HepG2 (cell line): ENCODE measurements at regions of chr2 and their contacts with region 1.

Region 1: DNA sequence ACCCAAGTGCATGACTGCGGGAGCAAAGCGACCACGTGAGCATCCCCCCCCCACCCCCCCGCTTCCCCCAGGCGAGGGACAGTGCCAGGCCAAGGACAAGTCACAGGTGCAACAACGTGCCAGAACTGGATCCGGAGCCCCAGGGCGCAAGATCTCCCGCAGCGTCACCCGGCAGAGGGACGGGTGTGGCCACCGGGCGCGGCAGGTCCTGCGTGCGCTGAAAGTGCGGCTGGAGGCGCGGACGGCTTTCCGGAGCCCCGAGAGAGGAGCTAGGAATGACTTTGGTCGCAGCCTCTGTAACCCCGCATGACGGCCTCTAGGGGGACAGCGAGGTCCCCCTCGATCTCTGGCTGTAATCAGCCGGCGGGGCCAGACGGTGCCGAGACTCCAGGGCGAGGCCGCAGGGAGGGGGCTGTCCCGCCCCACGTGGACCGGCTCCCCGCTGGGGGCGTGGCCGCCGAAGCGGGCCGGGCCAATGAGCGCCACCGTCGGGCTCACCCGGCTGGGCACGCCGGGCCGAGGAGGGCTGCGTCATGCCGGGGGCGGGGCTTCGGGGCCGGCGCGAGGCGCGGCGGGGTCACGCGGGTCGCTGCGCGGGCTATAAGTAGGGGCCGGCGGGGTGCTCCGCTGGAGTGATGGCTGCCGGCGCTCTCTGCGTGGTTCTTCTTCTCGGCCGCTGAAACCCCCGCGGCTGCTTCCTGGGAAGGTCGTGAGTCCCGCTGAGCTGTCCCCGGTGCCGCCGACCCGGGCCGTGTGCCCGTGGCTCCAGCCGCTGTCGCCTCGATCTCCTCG is at the start of gene SLC20A1:
- DNase-seq: peak; percentile 94
- ATAC-seq: peak; percentile 88
- H3K4me3 ChIP-seq: peak within 1 kb of the TSS; percentile 92 to 97 (median 94)
- H3K27ac ChIP-seq: peak within 1 kb of the TSS; percentile 92
- H3K4me1 ChIP-seq: peaks cover 83% of the 10 kb centered on the region
- H3K27me3 ChIP-seq: no peaks in the 10 kb centered on the region; a peak in 1 of 5 replicates
- CTCF ChIP-seq: peak; percentile 76
- EP300 ChIP-seq: peak; percentile 7 to 35; a peak in 3 of 4 replicates
- POLR2A ChIP-seq: peak; percentile 97 to 99
- RAD21 ChIP-seq: peak; percentile 86
- total RNA-seq, gene SLC20A1: 60.1 and 85.9 TPM in 2 replicates

Region 2: GRCh38 chr2:112584134-112584890 is 61.2 kb before region 1 on chr2 and contains the start of gene CHCHD5:
- CTCF ChIA-PET with region 1: no interaction called
- POLR2A ChIA-PET with region 1: interaction called, 35 read pairs
- in situ Hi-C with region 1: no loop called
- intact Hi-C with region 1: no loop called
- DNase-seq: peak; percentile 98
- ATAC-seq: peak; percentile 89
- H3K4me3 ChIP-seq: peak within 1 kb of the TSS; percentile 76 to 95 (median 87)
- H3K27ac ChIP-seq: peak within 1 kb of the TSS; percentile 97
- H3K4me1 ChIP-seq: peaks cover 40% of the 10 kb centered on the region
- H3K27me3 ChIP-seq: peaks cover 0 to 4% of the 10 kb centered on the region in 2 experiments; a peak in 1 of 5 replicates
- CTCF ChIP-seq: peak; percentile 60
- EP300 ChIP-seq: peak in 1 of 2 experiments; percentile 58; a peak in 3 of 4 replicates
- POLR2A ChIP-seq: peak; percentile 88 to 95
- RAD21 ChIP-seq: no peak; the same call in 1 of the 2 replicates
- total RNA-seq, gene CHCHD5: 22.8 and 23.9 TPM in 2 replicates

Region 3: DNA sequence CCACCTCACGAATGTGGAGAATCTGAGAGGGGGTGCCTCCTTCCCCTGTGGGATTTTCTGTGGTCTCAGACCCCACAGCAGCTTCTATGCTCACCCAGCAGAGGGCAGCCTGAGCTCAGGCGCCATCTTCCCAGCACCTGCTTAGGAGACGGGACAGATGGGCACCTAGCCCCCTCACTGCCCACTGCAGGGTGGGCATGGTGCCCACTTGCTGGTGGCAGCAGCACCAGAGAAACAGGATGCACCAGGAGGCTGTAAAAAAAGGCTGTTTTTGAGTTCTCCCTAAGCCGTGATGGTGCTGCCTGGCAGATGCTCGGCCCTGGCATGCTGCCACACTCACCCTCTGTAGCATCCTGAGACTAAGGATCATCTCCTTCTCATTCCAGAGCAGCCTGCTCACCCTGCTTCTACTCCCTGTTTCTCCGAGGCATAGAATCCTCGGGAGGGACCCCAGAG is 18.9 kb before region 1 on chr2:
- CTCF ChIA-PET with region 1: interaction called, 3 read pairs
- POLR2A ChIA-PET with region 1: interaction called, 94 read pairs
- in situ Hi-C with region 1: no loop called
- intact Hi-C with region 1: loop called (anchors 2 kb)
- DNase-seq: peak; percentile 41
- ATAC-seq: peak; percentile 93
- H3K4me3 ChIP-seq: no peak overlapping the region; a peak in 1 of 6 replicates
- H3K27ac ChIP-seq: no peak overlapping the region
- H3K4me1 ChIP-seq: peaks cover 34% of the 10 kb centered on the region
- H3K27me3 ChIP-seq: peaks cover 0 to 28% of the 10 kb centered on the region in 2 experiments; a peak in 3 of 5 replicates
- CTCF ChIP-seq: peak; percentile 99
- EP300 ChIP-seq: no peak
- POLR2A ChIP-seq: no peak
- RAD21 ChIP-seq: peak; percentile 98

Region 4: GRCh38 chr2:112666764-112667122 is 21.2 kb after region 1 on chr2:
- CTCF ChIA-PET with region 1: no interaction called
- POLR2A ChIA-PET with region 1: interaction called, 32 read pairs
- in situ Hi-C with region 1: no loop called
- intact Hi-C with region 1: no loop called
- DNase-seq: peak; percentile 74
- ATAC-seq: peak; percentile 69
- H3K4me3 ChIP-seq: no peak overlapping the region
- H3K27ac ChIP-seq: no peak overlapping the region
- H3K4me1 ChIP-seq: peaks cover 30% of the 10 kb centered on the region
- H3K27me3 ChIP-seq: no peaks in the 10 kb centered on the region
- CTCF ChIP-seq: no peak
- EP300 ChIP-seq: no peak
- POLR2A ChIP-seq: no peak
- RAD21 ChIP-seq: no peak

Region 5: DNA sequence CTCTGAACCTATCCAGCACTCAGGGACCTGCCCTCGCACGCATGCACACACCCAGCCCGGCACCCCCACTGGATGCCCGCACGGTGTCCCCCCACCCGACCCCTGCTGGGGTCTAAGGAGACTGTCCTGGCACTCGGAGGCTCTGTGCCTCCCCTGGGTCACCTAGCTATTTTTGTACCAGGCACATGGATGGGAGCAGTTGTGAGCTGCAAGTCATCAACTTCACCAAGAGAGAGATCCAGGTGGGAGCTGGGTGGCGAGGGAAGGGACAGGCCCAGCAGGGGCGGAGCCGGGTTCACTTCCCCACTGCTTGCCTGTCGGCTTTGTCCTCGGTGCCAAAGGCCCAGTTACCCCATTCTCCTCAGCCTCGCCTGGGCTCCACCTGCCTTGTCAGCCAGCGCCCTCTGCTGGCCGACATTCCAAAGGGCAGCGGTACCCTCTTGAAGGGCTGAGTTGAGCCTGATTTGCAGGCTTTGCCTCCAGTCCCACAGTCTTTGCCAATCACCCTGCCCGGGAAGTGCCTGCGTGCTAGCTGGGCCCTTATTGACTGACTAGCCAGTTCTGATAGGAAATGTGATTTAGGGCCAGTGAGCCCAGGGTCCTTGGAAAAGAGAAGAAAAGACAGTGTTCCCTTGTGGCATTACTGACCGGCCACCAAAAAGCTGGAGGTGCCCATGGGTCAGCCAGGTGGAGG is 81.1 kb after region 1 on chr2:
- CTCF ChIA-PET with region 1: interaction called, 3 read pairs
- POLR2A ChIA-PET with region 1: interaction called, 21 read pairs
- in situ Hi-C with region 1: no loop called
- intact Hi-C with region 1: loop called (anchors 1 kb)
- DNase-seq: peak; percentile 91
- ATAC-seq: peak; percentile 84
- H3K4me3 ChIP-seq: peak overlapping the region; percentile 44 to 75 (median 54)
- H3K27ac ChIP-seq: no peak overlapping the region
- H3K4me1 ChIP-seq: peaks cover 23% of the 10 kb centered on the region
- H3K27me3 ChIP-seq: peaks cover 0 to 7% of the 10 kb centered on the region in 2 experiments; a peak in 2 of 5 replicates
- CTCF ChIP-seq: peak; percentile 100
- EP300 ChIP-seq: peak in 1 of 2 experiments; percentile 56; a peak in 1 of 4 replicates
- POLR2A ChIP-seq: no peak
- RAD21 ChIP-seq: peak; percentile 100